OCI-LY7 (cell line): ENCODE measurements at regions of chr3 and their contacts with region 1.

Region 1: GRCh38 chr3:151395806-151396205 is 11.3 kb upstream of the P2RY12 start:
- DNase-seq: no peak
- H3K4me3 ChIP-seq: no peak overlapping the region
- H3K27ac ChIP-seq: no peak overlapping the region
- H3K4me1 ChIP-seq: peaks cover 11% of the 10 kb centered on the region
- CTCF ChIP-seq: no peak

Region 2: GRCh38 chr3:151356794-151357462 is 38.9 kb before region 1 on chr3:
- CTCF ChIA-PET with region 1: no interaction called
- POLR2A ChIA-PET with region 1: no interaction called
- intact Hi-C with region 1: no loop called
- DNase-seq: no peak
- H3K4me3 ChIP-seq: no peak overlapping the region
- H3K27ac ChIP-seq: no peak overlapping the region
- H3K4me1 ChIP-seq: no peaks in the 10 kb centered on the region
- CTCF ChIP-seq: no peak

Region 3: GRCh38 chr3:151384741-151385174 is 11.0 kb before region 1 on chr3 and contains the start of gene P2RY12:
- CTCF ChIA-PET with region 1: no interaction called
- POLR2A ChIA-PET with region 1: interaction called, 33 read pairs
- intact Hi-C with region 1: no loop called
- DNase-seq: peak; percentile 35
- H3K4me3 ChIP-seq: peak within 1 kb of the TSS; percentile 50
- H3K27ac ChIP-seq: peak within 1 kb of the TSS; percentile 73
- H3K4me1 ChIP-seq: peaks cover 39% of the 10 kb centered on the region
- CTCF ChIP-seq: no peak
- total RNA-seq, gene P2RY12: 0.19 TPM in 1 of 2 replicates, not detected in the other